H1 (cell line): ENCODE measurements at regions of chr7 and their contacts with region 1.

Region 1: DNA sequence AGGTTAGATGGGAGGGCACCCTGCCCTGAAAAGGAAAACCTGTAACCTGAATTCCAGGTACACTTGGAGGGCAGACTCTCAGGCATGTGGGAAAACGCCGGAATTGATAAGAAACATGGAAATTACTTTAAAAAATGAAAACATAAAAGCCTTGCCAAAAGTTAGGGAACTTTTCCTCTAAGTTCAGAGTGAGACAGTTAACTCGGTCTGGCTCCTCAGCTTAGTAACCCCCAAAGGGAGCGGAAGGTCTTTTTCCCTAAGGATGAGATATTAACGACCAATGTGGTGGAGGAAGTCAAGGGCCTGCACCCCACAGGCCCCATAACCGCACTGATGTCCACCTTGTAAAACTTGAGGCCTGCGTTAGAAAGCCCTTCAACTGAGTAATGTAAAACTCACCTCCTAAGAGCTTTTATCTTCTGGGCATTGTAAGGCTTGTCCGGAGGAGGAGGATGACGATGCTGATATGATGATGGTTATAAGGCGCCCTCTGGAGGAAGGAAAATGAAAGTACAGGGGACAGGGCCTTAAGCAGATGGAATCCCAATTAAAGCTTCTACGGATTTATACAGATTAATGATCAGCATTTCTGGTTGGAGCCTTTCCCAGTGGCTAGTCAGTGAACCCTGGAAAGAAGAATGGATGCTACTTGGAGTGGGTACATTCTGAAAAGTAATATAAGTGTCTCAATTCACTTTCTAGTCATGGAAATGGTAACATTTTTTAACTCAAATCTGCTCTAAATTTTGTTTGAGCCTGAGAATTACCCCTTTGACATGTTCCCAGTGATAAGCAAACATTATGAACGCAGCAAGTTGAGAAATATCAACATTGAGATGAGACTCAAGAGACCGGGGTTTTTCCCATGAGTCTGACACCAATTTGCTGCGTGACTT is 694 bp downstream of the COL1A2 start:
- DNase-seq: peak in 1 of 2 experiments; percentile 55
- H3K4me3 ChIP-seq: peak overlapping the region; percentile 47 to 77 (median 68)
- H3K27ac ChIP-seq: peak overlapping the region; percentile 63
- H3K4me1 ChIP-seq: peaks cover 4 to 24% (median 13%) of the 10 kb centered on the region in 4 experiments; a peak in 6 of 7 replicates
- H3K27me3 ChIP-seq: peaks cover 0 to 3% (median 0%) of the 10 kb centered on the region in 4 experiments; a peak in 3 of 7 replicates
- CTCF ChIP-seq: peak in 2 of 3 experiments; percentile 82 to 83; a peak in 3 of 4 replicates
- EP300 ChIP-seq: no peak
- POLR2A ChIP-seq: no peak
- RAD21 ChIP-seq: peak; percentile 94

Region 2: GRCh38 chr7:94276795-94277194 is 118.6 kb before region 1 on chr7:
- CTCF ChIA-PET with region 1: interaction called, 18 read pairs
- POLR2A ChIA-PET with region 1: interaction called, 4 read pairs
- DNase-seq: no peak
- H3K4me3 ChIP-seq: no peak overlapping the region
- H3K27ac ChIP-seq: no peak overlapping the region
- H3K4me1 ChIP-seq: no peaks in the 10 kb centered on the region
- H3K27me3 ChIP-seq: no peaks in the 10 kb centered on the region
- CTCF ChIP-seq: peak in 2 of 3 experiments; percentile 48 to 58; a peak in 3 of 4 replicates
- EP300 ChIP-seq: no peak
- POLR2A ChIP-seq: no peak
- RAD21 ChIP-seq: peak; percentile 77 to 80

Region 3: DNA sequence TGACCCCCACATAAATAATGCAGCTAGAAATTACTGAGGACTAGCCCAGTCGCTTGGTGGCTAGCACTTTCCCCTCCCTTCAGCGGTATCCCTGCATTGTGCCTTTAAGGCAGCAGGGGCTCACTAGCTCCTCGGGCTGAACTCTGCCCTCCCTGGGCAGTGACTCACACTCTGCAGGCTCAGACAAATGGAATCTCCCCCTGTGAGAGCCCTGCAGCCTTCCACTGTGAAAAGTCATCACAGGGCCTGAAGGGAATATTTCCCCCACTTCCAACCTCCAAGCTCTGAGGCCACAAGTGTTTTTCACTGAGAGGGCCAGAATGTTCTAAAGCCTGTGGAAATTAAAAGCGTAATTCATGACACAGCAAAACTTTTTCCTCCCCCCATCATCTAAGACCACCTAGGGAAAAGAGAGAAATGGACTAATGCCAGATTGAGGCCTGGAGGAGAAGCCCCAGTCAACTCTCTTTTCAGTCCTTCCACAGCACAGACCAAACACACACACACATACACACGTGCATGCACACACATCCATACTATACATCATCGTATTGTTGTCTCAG is 94.3 kb before region 1 on chr7:
- CTCF ChIA-PET with region 1: interaction called, 372 read pairs
- POLR2A ChIA-PET with region 1: interaction called, 12 read pairs
- DNase-seq: peak; percentile 57 to 67
- H3K4me3 ChIP-seq: peak overlapping the region in 1 of 4 experiments; percentile 31; a peak in 2 of 8 replicates
- H3K27ac ChIP-seq: 0 out of 2 replicates have a peak overlapping the region, but pooled peaks have one; percentile 17
- H3K4me1 ChIP-seq: peaks cover 3 to 23% (median 8%) of the 10 kb centered on the region in 4 experiments; a peak in 6 of 7 replicates
- H3K27me3 ChIP-seq: peaks cover 0 to 1% (median 0%) of the 10 kb centered on the region in 4 experiments; a peak in 1 of 7 replicates
- CTCF ChIP-seq: peak; percentile 15 to 46 (median 21); a peak in 3 of 4 replicates
- EP300 ChIP-seq: no peak
- POLR2A ChIP-seq: no peak
- RAD21 ChIP-seq: peak; percentile 39 to 47; a peak in 3 of 4 replicates

Region 4: DNA sequence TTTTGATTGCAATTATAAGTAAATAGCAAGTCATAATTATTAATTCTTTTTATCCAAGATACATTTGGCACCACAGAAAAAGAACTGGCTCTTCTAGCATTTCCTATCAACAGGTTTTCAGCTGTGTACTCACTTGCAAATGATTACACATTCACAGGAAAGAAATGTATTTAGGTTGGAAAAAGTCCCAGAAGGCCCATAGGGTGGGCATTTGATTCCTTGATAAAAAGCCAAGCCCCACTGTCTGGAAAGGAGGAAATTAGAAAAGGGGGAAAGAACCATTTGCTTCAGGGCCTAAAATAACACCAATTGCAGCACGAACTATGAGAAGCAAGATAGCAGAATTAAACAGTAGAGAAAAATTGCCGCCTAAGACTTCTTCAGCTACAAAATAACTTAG is 81.5 kb before region 1 on chr7:
- CTCF ChIA-PET with region 1: no interaction called
- POLR2A ChIA-PET with region 1: no interaction called
- DNase-seq: no peak
- H3K4me3 ChIP-seq: no peak overlapping the region
- H3K27ac ChIP-seq: no peak overlapping the region
- H3K4me1 ChIP-seq: no peaks in the 10 kb centered on the region
- H3K27me3 ChIP-seq: no peaks in the 10 kb centered on the region
- CTCF ChIP-seq: no peak
- EP300 ChIP-seq: no peak
- POLR2A ChIP-seq: no peak
- RAD21 ChIP-seq: no peak

Region 5: DNA sequence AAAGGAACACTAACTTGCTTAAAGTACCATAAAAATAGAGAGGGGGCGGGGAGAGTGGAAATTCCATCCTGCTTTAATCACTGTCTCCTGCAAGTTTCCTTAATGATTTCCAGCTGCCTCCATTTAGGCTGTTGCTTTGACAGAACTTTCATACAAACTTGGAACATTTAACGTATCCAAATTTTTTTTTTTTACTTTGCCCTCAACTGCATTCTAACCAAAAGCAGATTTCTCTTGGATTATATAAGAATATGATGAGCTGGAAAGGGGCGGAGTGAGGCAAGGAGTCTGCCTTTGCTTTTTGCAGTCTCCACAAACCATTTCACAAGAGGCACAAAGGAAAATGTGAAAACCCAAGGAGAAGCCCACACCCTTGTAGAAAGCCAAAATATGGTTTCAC is 47.2 kb before region 1 on chr7:
- CTCF ChIA-PET with region 1: interaction called, 10 read pairs
- POLR2A ChIA-PET with region 1: no interaction called
- DNase-seq: no peak
- H3K4me3 ChIP-seq: no peak overlapping the region
- H3K27ac ChIP-seq: no peak overlapping the region
- H3K4me1 ChIP-seq: peaks cover 0 to 3% (median 0%) of the 10 kb centered on the region in 4 experiments; a peak in 3 of 7 replicates
- H3K27me3 ChIP-seq: no peaks in the 10 kb centered on the region
- CTCF ChIP-seq: no peak
- EP300 ChIP-seq: no peak
- POLR2A ChIP-seq: no peak
- RAD21 ChIP-seq: no peak

Region 6: DNA sequence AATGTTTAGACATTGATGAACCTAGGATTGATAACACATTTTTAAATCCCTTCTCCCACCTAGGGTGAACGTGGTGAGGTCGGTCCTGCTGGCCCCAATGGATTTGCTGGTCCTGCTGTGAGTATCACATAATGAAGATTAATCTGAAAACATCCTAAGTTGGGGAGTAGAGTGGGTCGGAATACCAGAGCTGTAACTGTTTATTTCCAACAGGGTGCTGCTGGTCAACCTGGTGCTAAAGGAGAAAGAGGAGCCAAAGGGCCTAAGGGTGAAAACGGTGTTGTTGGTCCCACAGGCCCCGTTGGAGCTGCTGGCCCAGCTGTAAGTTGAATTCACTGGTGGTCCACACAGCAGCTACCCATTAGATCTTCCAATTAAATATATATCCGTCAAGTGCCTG is 24.9 kb after region 1 on chr7:
- CTCF ChIA-PET with region 1: no interaction called
- POLR2A ChIA-PET with region 1: no interaction called
- DNase-seq: no peak
- H3K4me3 ChIP-seq: no peak overlapping the region
- H3K27ac ChIP-seq: no peak overlapping the region
- H3K4me1 ChIP-seq: no peaks in the 10 kb centered on the region
- H3K27me3 ChIP-seq: no peaks in the 10 kb centered on the region
- CTCF ChIP-seq: no peak
- EP300 ChIP-seq: no peak
- POLR2A ChIP-seq: no peak
- RAD21 ChIP-seq: no peak

Region 7: DNA sequence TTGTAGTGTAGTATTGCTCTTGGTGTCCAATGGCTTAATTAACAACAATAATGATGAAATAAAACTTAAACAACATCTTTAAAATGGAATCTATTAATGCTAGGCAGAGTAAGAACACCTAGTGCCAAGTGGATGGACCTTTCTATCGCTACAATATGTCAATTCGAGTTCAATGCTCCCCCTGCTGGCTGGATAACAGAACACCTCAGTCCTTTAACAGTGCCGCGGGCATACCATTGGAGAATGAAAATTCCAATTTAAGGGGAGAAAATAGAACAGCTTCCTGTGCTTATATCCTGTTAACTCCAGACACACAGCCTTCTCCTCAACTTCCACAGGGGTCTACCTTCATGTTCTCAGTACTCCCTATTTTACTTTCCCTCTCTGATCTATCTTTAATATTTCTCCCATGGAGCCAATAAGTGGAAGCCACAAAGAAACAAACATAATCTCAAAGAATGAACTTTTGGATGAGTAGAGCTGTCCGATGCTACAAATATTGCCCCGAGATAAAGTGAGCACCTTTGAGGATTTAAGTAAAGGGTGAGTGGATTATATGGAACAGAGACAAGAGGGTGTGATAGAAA is 40.7 kb after region 1 on chr7:
- CTCF ChIA-PET with region 1: interaction called, 13 read pairs
- POLR2A ChIA-PET with region 1: no interaction called
- DNase-seq: peak; percentile 19 to 66
- H3K4me3 ChIP-seq: no peak overlapping the region
- H3K27ac ChIP-seq: no peak overlapping the region
- H3K4me1 ChIP-seq: no peaks in the 10 kb centered on the region
- H3K27me3 ChIP-seq: no peaks in the 10 kb centered on the region
- CTCF ChIP-seq: peak; percentile 34 to 87 (median 74)
- EP300 ChIP-seq: no peak
- POLR2A ChIP-seq: no peak
- RAD21 ChIP-seq: peak; percentile 72 to 75